Activated CD8-positive, alpha-beta T cell treated with anti-CD3 and anti-CD28 coated beads for 36 hours (primary cell): ENCODE measurements at regions of chr4 and their contacts with region 1.

Region 1: DNA sequence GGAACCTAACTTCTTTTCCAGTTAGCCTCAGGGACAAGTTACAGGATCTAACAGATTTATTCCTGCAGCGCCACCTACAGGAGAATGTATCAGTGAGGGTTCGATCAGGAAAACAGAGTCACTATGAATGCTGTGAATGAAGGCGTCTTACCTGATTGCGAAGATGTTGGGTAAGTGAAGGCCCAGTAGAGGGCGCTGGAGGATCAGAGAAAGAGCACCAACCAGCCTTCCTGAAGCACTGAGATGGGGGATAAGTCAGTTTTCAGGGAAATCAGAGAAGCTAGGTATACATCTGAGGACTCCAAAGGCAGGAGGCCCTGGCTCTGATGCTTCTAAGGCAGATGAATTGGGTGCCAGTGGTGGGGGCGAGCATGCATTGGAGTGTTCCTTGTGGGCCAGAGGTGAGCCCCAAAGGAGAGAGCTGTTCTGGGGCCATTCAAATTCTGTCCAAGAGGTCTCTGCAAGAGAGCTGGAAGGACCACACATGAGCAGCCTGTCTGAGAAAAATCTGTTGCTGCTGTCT is 169.9 kb upstream of the AADAT start:
- DNase-seq: peak; percentile 74
- ATAC-seq: peak; percentile 79
- H3K4me3 Mint-ChIP-seq: no peak overlapping the region
- H3K27ac Mint-ChIP-seq: no peak overlapping the region
- H3K4me1 Mint-ChIP-seq: no peaks in the 10 kb centered on the region
- H3K27me3 Mint-ChIP-seq: no peaks in the 10 kb centered on the region
- CTCF ChIP-seq: peak; percentile 82

Region 2: DNA sequence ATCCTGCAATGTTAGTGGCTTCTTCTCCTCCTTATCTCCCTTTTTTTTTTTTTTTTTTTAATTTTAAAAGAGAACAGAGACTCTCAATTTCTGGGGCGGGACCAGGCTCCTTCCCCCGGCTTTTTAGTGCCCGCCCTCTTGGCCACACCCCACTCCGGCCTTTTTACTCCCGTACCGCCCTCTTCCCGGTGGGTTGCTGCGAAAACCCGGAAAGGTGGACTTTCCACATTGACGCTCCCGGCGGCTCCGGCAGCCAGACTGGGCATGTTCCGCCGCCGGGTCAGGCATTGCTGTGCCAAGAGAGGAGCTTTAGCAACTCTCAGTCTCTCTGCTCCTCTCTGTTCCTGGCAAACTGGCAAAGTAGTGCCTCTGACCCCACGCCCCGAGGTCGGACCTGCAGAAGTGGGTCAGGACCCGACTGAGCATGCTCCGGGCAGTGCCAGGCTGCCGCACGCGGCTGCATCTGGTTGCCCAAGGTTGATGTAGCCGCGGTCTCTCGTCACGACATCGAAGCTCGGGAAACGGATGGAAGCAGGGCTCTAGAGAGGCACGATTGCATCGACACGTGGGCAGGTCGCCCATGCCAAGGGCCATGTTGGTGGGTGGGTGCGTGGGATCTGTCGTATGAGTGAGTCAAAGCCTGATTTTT is 232.4 kb before region 1 on chr4:
- CTCF ChIA-PET with region 1: no interaction called
- POLR2A ChIA-PET with region 1: no interaction called
- intact Hi-C with region 1: no loop called
- DNase-seq: peak; percentile 94
- ATAC-seq: peak; percentile 85
- H3K4me3 Mint-ChIP-seq: peak overlapping the region; percentile 81
- H3K27ac Mint-ChIP-seq: peak overlapping the region; percentile 76
- H3K4me1 Mint-ChIP-seq: peaks cover 3% of the 10 kb centered on the region
- H3K27me3 Mint-ChIP-seq: peaks cover 19% of the 10 kb centered on the region
- CTCF ChIP-seq: no peak

Region 3: DNA sequence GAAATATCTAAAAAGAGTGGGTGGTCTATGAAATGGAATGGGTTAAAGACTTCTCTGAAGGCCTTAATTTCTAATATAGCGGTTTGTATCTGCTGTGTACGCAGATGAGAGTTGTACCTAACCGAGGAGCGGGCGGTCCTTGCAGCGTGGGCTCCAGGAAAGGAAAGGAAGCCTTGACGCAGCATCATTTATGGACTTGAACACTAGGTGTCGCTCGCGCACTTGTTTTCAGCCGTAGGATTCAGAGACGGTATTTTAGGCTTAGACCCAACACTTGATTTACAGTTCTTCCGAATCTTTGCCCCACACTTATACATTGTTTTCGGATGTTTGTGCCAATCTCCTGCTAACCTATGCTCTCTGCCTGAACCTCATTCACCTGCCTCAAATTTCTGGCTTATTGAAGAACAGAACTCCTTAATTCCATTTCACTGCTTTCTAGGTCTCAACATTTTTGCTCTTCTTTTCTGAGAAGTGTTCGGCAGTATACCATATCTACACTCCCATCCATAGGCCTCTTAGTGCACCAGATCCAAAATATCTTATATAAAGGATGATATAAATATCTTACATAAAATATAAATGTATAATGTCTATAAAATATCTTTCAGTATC is 121.0 kb before region 1 on chr4:
- CTCF ChIA-PET with region 1: interaction called, 10 read pairs
- POLR2A ChIA-PET with region 1: no interaction called
- intact Hi-C with region 1: loop called (anchors 2 kb)
- DNase-seq: peak; percentile 85
- ATAC-seq: peak; percentile 62
- H3K4me3 Mint-ChIP-seq: no peak overlapping the region
- H3K27ac Mint-ChIP-seq: no peak overlapping the region
- H3K4me1 Mint-ChIP-seq: peaks cover 2% of the 10 kb centered on the region
- H3K27me3 Mint-ChIP-seq: peaks cover 3% of the 10 kb centered on the region
- CTCF ChIP-seq: peak; percentile 68

Region 4: DNA sequence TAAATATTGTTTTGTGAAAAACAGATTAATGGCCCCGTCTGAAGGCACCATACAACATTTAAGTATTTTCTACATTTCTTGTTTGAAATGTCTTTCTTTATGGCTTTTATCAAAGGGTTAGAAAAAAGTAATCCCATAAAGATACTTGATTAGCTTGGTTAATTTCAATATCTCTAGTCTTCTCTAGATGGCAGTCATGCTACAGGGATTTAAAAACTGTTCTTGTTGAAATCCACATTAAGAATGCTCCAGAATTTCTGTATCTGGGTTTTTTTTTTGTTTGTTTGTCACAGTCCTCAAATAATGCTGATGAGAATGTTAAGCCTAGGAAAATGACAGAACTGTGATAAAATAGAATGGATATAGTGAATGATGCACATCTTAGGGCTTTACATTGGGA is 60.9 kb before region 1 on chr4:
- CTCF ChIA-PET with region 1: no interaction called
- POLR2A ChIA-PET with region 1: no interaction called
- intact Hi-C with region 1: no loop called
- DNase-seq: no peak
- ATAC-seq: no peak
- H3K4me3 Mint-ChIP-seq: no peak overlapping the region
- H3K27ac Mint-ChIP-seq: no peak overlapping the region
- H3K4me1 Mint-ChIP-seq: no peaks in the 10 kb centered on the region
- H3K27me3 Mint-ChIP-seq: no peaks in the 10 kb centered on the region
- CTCF ChIP-seq: no peak

Region 5: DNA sequence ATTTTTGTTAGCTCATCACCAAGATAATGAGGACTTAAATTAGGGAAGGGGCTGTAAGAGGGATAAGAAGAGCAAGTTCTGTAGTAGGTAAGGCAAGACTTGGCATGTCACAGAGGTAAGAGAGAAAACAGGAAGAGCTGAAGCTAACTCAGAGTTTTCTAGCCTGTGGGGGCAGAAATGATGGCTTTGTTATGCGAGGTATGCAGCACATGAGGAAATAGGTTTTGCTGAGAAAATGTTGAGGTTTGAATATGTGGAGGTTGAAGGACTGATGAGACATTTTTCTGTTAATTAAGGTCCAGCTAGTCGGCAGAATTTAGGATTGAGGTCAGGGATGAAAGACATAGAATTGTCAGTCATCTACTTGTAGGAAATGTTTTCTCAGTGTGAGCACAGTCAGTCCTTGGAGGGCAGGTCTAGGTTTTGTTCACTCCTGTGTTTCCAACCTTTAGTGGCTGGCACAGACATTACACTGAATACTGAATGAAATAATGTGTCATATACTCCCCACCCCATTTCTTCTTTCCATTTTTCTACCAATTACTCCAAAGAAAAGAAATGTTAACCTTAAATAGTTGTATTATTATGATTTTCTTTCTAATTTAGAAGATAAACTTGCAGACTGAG is 15.9 kb before region 1 on chr4:
- CTCF ChIA-PET with region 1: interaction called, 17 read pairs
- POLR2A ChIA-PET with region 1: no interaction called
- intact Hi-C with region 1: no loop called
- DNase-seq: no peak
- ATAC-seq: no peak
- H3K4me3 Mint-ChIP-seq: no peak overlapping the region
- H3K27ac Mint-ChIP-seq: no peak overlapping the region
- H3K4me1 Mint-ChIP-seq: no peaks in the 10 kb centered on the region
- H3K27me3 Mint-ChIP-seq: no peaks in the 10 kb centered on the region
- CTCF ChIP-seq: no peak

Region 6: DNA sequence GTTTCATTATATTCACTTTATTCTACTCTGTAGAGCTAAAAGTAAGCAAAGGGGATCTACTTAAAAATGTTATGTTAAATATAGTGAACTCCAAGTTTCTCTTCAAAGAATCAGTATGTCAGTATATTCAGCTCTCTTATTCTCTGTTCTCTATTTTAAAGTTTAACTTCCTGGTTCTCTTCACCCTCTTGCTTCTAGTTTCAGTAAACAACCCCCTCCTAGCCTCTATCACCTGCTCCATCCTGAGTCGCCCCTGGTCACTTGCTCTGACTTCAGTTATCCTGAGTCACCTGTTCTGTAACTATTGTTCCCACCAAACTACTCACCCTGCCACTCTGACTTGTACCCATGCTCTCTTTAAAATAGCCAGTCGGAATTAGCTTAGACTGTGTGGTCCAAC is 10.9 kb after region 1 on chr4:
- CTCF ChIA-PET with region 1: interaction called, 34 read pairs
- POLR2A ChIA-PET with region 1: no interaction called
- intact Hi-C with region 1: no loop called
- DNase-seq: no peak
- ATAC-seq: no peak
- H3K4me3 Mint-ChIP-seq: no peak overlapping the region
- H3K27ac Mint-ChIP-seq: no peak overlapping the region
- H3K4me1 Mint-ChIP-seq: no peaks in the 10 kb centered on the region
- H3K27me3 Mint-ChIP-seq: no peaks in the 10 kb centered on the region
- CTCF ChIP-seq: no peak

Region 7: GRCh38 chr4:170325599-170325998 is 65.9 kb after region 1 on chr4:
- CTCF ChIA-PET with region 1: no interaction called
- POLR2A ChIA-PET with region 1: no interaction called
- intact Hi-C with region 1: no loop called
- DNase-seq: no peak
- ATAC-seq: no peak
- H3K4me3 Mint-ChIP-seq: no peak overlapping the region
- H3K27ac Mint-ChIP-seq: no peak overlapping the region
- H3K4me1 Mint-ChIP-seq: no peaks in the 10 kb centered on the region
- H3K27me3 Mint-ChIP-seq: no peaks in the 10 kb centered on the region
- CTCF ChIP-seq: no peak

Region 8: DNA sequence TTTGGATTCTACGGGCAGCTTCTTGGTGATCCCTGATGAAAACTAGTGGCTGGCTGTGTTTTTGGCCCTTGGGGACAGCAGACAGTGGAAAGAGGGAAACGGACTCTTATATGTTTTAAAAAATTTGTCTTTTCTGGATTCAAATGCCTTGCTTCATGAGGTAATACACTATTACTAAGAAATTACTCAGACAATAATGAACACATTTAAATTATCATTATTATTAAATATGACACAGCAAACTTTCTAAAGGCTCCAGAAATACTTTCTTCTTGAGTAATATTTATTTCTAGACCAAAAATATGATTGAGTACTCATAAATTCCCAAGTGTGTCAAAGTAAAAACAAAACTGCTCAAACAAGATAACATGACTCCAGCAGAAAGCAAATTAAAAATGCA is 350.7 kb after region 1 on chr4:
- CTCF ChIA-PET with region 1: no interaction called
- POLR2A ChIA-PET with region 1: no interaction called
- intact Hi-C with region 1: no loop called
- DNase-seq: no peak
- ATAC-seq: no peak
- H3K4me3 Mint-ChIP-seq: no peak overlapping the region
- H3K27ac Mint-ChIP-seq: no peak overlapping the region
- H3K4me1 Mint-ChIP-seq: no peaks in the 10 kb centered on the region
- H3K27me3 Mint-ChIP-seq: no peaks in the 10 kb centered on the region
- CTCF ChIP-seq: no peak